ENCODE measurements at regions of chr17 and their contacts with region 1.

Region 1: DNA sequence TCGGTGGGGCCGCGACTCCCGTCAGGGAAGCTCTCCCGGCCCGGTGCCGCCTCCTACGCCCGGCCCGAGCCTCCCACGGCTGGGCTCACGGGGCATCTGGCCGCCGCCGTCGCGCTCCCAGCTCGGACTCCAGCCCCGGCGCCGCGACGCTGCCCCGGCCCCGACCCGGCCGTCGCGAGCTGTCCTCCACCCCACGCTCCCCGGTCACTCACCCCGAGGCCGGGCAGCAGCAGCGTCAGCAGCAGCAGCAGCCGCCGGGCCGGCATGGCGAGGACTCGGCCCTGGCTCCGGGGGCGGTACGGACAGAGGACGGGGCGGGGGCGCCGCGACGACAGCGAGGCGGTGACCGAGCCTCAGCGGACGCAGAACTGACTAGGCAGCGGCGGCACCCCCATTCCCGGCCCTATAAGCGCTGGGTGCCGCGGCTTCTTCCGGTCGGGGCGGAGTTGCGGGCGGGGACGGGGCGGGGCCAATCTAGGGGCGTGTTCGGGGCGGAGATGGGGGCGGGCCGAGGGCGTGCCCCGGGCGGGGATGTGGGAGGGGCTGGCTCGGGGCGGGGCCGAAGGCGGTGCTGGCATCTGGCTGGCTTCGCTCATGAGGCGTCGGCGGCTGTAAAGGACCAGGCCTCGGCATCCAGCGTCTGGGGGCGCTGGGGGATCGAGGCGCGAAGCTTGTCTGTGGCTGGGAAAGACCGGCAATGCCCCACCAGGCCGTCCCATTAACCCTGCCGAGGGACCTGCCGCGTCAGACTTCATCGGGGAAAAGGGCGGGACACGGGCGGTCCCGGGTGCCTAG is at the start of gene ERN1:
- DNase-seq: peak; percentile 93
- H3K4me3 ChIP-seq: peak within 1 kb of the TSS; percentile 69 to 78 (median 73)
- H3K27ac ChIP-seq: peak within 1 kb of the TSS; percentile 68
- H3K4me1 ChIP-seq: peaks cover 22% of the 10 kb centered on the region
- H3K27me3 ChIP-seq: no peaks in the 10 kb centered on the region
- CTCF ChIP-seq: no peak
- total RNA-seq, gene ERN1: 18.8 to 36.8 TPM

Region 2: GRCh38 chr17:63919311-63919723 is 210.6 kb before region 1 on chr17:
- CTCF ChIA-PET with region 1: interaction called, 10 read pairs
- dilution Hi-C with region 1: no loop called
- in situ Hi-C with region 1: loop called (anchors 10 kb)
- intact Hi-C with region 1: loop called (anchors 1 kb)
- DNase-seq: peak; percentile 38
- H3K4me3 ChIP-seq: no peak overlapping the region
- H3K27ac ChIP-seq: no peak overlapping the region
- H3K4me1 ChIP-seq: no peaks in the 10 kb centered on the region
- H3K27me3 ChIP-seq: no peaks in the 10 kb centered on the region
- CTCF ChIP-seq: peak; percentile 66 to 92

Region 3: DNA sequence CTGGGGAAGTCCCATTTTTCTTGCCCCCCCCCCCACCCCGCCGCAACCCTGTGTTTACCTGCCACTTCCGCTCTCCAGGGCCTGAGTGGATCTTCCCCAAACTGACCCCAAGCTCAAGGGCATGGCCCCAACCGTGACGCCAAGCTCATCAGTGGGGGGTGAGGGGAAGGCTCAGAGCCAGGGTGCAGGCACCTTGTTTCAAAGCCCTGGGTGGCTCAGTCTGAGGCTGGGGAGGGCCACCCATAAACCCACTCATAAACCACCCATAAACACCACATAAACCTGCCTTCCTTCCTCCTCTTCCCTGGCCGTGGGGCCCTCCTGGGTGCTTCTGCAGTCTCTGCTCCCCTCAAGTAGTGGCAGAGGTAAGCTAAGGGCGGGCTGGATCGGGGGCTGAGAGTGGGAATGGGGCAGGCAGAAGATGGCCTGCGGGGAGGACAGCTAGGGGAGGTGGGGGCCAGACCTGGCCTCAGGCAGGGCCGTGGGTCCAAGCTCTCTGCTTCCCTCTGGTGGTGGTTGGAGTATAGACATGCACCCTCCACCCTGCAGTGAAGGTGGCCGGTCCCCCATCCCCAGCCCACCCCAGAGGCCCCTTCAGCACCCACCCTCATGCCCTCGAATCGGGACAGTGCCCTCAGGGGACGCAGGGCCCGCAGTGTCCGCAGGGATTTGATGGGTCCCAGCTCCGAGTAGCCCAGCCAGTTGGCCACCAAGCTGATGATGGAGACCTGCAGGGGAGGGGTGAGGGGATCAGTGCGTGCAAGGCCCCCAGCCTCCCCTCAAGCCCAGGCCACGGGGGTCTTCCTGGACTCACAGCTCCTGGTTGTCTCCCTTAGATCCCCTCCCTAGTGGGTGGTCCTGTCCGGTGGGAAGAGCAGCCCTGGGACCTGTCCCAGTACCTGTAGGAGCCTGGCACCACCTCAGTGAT is 183.3 kb before region 1 on chr17:
- CTCF ChIA-PET with region 1: interaction called, 3 read pairs
- dilution Hi-C with region 1: no loop called
- in situ Hi-C with region 1: no loop called
- intact Hi-C with region 1: loop called (anchors 1 kb)
- DNase-seq: no peak
- H3K4me3 ChIP-seq: no peak overlapping the region
- H3K27ac ChIP-seq: no peak overlapping the region
- H3K4me1 ChIP-seq: no peaks in the 10 kb centered on the region
- H3K27me3 ChIP-seq: no peaks in the 10 kb centered on the region
- CTCF ChIP-seq: peak; percentile 45 to 73

Region 4: GRCh38 chr17:64032081-64032480 is 97.9 kb before region 1 on chr17:
- CTCF ChIA-PET with region 1: interaction called, 62 read pairs
- dilution Hi-C with region 1: loop called (anchors 5 kb)
- in situ Hi-C with region 1: loop called (anchors 5 kb)
- intact Hi-C with region 1: loop called (anchors 1 kb)
- DNase-seq: peak; percentile 60
- H3K4me3 ChIP-seq: no peak overlapping the region
- H3K27ac ChIP-seq: no peak overlapping the region
- H3K4me1 ChIP-seq: peaks cover 13% of the 10 kb centered on the region
- H3K27me3 ChIP-seq: no peaks in the 10 kb centered on the region
- CTCF ChIP-seq: no peak

Region 5: GRCh38 chr17:64056269-64057005 is 73.5 kb before region 1 on chr17:
- CTCF ChIA-PET with region 1: no interaction called
- dilution Hi-C with region 1: no loop called
- in situ Hi-C with region 1: no loop called
- intact Hi-C with region 1: no loop called
- DNase-seq: no peak
- H3K4me3 ChIP-seq: no peak overlapping the region
- H3K27ac ChIP-seq: no peak overlapping the region
- H3K4me1 ChIP-seq: peaks cover 2% of the 10 kb centered on the region
- H3K27me3 ChIP-seq: no peaks in the 10 kb centered on the region
- CTCF ChIP-seq: peak; percentile 10 to 25

Region 6: DNA sequence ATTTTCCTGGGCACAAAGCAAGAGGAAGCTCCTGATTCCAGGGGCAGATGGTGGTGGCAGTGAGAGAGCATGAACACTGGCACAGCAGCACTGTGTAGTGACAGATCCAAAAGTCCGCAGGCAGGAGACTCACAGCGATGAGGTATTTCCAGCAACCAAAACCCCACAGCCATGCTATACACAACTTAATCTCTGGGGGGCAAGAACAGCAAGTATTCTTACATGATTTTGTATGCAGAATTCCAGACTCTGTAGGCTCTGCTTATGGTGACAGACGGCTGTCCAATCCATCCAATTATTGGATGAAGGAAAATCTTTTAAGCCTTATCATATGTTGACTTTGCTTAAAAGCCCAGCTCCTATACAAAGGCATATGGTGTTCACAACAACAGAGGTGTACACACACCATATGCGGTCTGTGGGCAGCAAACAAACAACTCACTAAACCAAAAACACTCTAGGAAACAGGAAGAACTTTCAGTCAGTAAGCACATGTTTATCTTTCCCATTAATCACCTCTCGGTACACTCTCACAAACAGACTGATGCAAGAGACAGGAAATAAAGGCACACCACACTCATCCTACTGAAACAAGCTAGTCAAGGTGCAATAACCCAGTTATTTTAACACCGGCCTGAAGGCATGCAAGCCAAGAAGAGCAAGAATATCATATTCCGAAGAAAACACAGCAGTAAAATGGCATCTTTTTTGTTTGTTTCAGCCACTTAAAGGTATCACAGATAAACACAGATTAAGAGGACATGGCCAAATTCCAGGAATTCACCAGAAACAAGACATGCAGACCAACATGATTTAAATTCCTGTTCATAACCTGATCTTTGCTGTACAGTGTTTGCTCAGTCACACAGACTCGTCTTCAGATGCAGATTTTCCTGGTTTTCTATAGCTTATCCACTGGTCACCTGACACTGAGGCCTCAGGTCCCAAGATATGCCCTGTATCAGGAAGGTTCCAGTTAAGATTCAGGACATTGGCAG is 47.9 kb before region 1 on chr17:
- CTCF ChIA-PET with region 1: interaction called, 3 read pairs
- dilution Hi-C with region 1: no loop called
- in situ Hi-C with region 1: no loop called
- intact Hi-C with region 1: loop called (anchors 1 kb)
- DNase-seq: peak; percentile 83
- H3K4me3 ChIP-seq: no peak overlapping the region
- H3K27ac ChIP-seq: peak overlapping the region; percentile 79
- H3K4me1 ChIP-seq: peaks cover 32% of the 10 kb centered on the region
- H3K27me3 ChIP-seq: no peaks in the 10 kb centered on the region
- CTCF ChIP-seq: no peak